Activated CD4-positive, alpha-beta T cell treated with anti-CD3 and anti-CD28 coated beads, Interleukin-2, amount 10 ng/mL, durations not matched to agents 24 days and 14 days (primary cell): ENCODE measurements at regions of chr2 and their contacts with region 1.

Region 1: GRCh38 chr2:20097879-20098714 is 46.7 kb upstream of the LAPTM4A start:
- DNase-seq: peak; percentile 91
- H3K4me3 Mint-ChIP-seq: no peak overlapping the region
- H3K27ac Mint-ChIP-seq: no peak overlapping the region
- H3K4me1 Mint-ChIP-seq: peaks cover 5% of the 10 kb centered on the region
- H3K27me3 Mint-ChIP-seq: peaks cover 14% of the 10 kb centered on the region

Region 2: GRCh38 chr2:19702267-19702666 is 395.8 kb before region 1 on chr2:
- intact Hi-C with region 1: no loop called
- DNase-seq: no peak
- H3K4me3 Mint-ChIP-seq: no peak overlapping the region
- H3K27ac Mint-ChIP-seq: no peak overlapping the region
- H3K4me1 Mint-ChIP-seq: no peaks in the 10 kb centered on the region
- H3K27me3 Mint-ChIP-seq: no peaks in the 10 kb centered on the region

Region 3: DNA sequence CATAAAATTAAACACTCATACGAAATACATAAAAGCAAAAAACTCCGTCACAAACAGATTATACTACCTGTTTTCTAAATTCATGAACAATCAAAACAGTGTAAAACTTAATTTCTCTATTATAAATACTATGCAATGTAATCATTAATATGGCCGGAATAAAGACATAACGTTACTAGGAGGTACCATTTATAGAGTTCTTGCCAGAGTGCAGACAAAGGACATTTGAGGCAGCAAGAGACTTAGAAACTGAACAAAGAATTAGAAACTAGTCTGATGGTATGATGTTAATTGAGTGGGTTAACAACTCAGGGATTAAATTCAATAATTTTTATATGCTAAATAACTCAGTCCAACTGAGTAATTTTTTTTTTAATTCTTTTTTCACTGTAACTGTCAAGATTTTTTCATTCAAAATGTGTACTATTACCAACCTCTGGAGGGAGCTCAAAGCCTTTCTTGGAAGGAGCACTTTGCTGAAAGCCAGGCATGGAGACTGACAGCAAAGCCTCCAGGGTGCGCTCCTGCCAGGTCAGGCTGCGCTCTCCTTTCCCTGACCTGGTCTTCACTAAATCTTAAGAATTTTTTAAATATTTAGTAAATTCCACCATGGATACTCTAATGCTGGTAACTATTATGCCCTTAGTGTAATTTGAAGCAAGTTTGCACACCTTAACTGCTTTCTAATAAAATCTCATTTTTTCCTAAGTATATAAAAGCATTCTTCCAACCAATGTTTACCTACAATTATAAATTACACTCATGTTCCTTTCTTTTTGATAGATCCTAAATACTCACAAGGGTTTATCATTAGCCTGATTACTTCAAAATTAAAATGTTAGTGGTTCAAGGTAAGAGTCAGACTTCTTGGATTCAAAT is 142.3 kb before region 1 on chr2:
- intact Hi-C with region 1: loop called (anchors 1 kb)
- DNase-seq: peak; percentile 84
- H3K4me3 Mint-ChIP-seq: no peak overlapping the region
- H3K27ac Mint-ChIP-seq: no peak overlapping the region
- H3K4me1 Mint-ChIP-seq: no peaks in the 10 kb centered on the region
- H3K27me3 Mint-ChIP-seq: no peaks in the 10 kb centered on the region

Region 4: DNA sequence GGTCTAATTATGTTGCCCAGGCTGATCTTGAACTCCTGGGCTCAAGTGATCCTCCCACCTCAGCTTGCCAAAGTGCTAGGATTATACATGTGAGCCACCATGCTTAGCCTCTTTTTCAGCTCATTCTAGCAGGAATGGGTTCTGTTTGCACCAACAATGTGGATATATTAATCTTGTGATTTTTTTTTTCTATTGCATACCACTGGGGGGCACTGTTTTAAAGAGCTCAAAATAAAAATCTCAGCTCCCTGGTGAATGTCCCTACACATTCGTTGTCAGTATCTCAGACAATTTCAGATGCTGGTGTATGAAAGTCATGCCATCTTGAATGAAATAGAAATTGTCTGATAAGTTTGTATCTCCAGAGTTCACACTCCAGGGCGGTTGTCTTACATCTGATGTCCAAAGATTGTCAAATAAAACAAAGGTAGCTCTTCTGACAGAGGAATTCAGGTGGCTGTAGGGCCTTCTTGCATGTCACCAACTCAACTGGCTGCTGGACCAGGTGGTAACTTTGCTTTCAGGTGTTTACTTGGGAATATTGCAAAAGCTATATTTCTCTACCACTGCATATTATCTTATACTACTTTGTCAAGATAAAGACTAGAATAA is 82.5 kb before region 1 on chr2:
- intact Hi-C with region 1: loop called (anchors 1 kb)
- DNase-seq: peak; percentile 70
- H3K4me3 Mint-ChIP-seq: no peak overlapping the region
- H3K27ac Mint-ChIP-seq: no peak overlapping the region
- H3K4me1 Mint-ChIP-seq: peaks cover 4% of the 10 kb centered on the region
- H3K27me3 Mint-ChIP-seq: peaks cover 40% of the 10 kb centered on the region